CD4-positive, alpha-beta memory T cell (primary cell): ENCODE measurements at regions of chr20 and their contacts with region 1.

Region 1: GRCh38 chr20:16821211-16822089 is 73.3 kb downstream of the OTOR start:
- DNase-seq: peak in 3 of 5 donors; percentile 16 to 24 (median 22)
- H3K4me3 ChIP-seq: no peak overlapping the region
- H3K4me3 Mint-ChIP-seq: no peak overlapping the region
- H3K27ac ChIP-seq: no peak overlapping the region
- H3K27ac Mint-ChIP-seq: no peak overlapping the region
- H3K4me1 ChIP-seq: no peaks in the 10 kb centered on the region
- H3K4me1 Mint-ChIP-seq: no peaks in the 10 kb centered on the region
- H3K27me3 ChIP-seq: no peaks in the 10 kb centered on the region
- H3K27me3 Mint-ChIP-seq: peaks cover 16 to 28% of the 10 kb centered on the region in 2 donors

Region 2: DNA sequence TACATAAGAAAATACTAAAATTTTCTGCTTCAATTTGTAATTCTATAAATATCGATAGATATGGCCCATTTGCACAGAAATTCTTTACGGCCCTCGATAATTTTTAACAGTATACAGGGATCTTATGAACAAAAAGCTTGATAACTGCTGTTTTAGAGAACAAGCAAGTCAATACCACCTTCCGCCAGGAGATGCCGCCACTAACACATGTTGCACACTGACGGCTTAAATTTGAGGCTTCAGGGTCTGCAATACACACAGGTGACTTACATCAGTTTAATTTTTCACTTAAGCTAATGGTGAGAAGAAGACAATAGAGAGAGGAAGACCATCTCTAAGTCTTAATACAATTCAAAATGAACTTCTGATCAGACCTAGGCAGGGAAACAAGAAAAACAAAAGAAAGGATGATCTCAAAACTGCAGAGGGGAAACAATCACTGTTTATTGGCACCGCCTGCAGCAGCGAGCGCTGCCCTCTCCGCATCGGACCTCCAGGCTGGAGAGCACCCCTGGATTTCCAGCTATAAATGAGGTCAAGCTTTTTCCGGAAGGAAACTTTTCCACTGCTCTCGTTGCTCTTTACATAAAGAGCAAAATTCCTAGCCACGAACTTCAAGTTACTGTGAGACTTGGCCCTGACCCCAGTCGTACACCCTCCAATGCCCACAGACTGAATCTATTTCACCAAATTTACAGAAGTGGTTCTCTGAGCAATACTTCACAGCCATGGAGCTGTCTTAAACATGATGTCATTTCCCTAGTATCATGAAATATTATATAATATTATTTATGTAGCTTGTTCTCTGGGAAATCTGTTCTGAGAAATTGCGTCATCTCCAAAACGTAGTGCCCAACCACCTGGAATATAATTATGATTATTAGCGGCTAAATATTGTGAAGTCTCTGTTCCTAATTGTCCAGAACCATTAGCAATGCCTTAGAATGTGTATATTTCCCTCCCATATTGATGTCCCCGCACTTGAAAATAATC is 19.2 kb before region 1 on chr20:
- CTCF ChIA-PET with region 1: interaction called, 74 read pairs
- POLR2A ChIA-PET with region 1: no interaction called
- intact Hi-C with region 1: no loop called
- DNase-seq: peak; percentile 20 to 45 (median 32)
- H3K4me3 ChIP-seq: no peak overlapping the region
- H3K4me3 Mint-ChIP-seq: no peak overlapping the region
- H3K27ac ChIP-seq: no peak overlapping the region
- H3K27ac Mint-ChIP-seq: no peak overlapping the region
- H3K4me1 ChIP-seq: no peaks in the 10 kb centered on the region
- H3K4me1 Mint-ChIP-seq: peaks cover 0 to 1% (median 0%) of the 10 kb centered on the region in 4 donors
- H3K27me3 ChIP-seq: no peaks in the 10 kb centered on the region
- H3K27me3 Mint-ChIP-seq: peaks cover 32 to 37% of the 10 kb centered on the region in 2 donors

Region 3: GRCh38 chr20:16810216-16810615 is 11.2 kb before region 1 on chr20:
- CTCF ChIA-PET with region 1: interaction called, 74 read pairs
- POLR2A ChIA-PET with region 1: no interaction called
- intact Hi-C with region 1: no loop called
- DNase-seq: no peak
- H3K4me3 ChIP-seq: no peak overlapping the region
- H3K4me3 Mint-ChIP-seq: no peak overlapping the region
- H3K27ac ChIP-seq: no peak overlapping the region
- H3K27ac Mint-ChIP-seq: no peak overlapping the region
- H3K4me1 ChIP-seq: no peaks in the 10 kb centered on the region
- H3K4me1 Mint-ChIP-seq: no peaks in the 10 kb centered on the region
- H3K27me3 ChIP-seq: no peaks in the 10 kb centered on the region
- H3K27me3 Mint-ChIP-seq: peaks cover 20 to 25% of the 10 kb centered on the region in 2 donors